CD14-positive monocyte (primary cell): ENCODE measurements at regions of chr6 and their contacts with region 1.

Region 1: GRCh38 chr6:30616811-30617564 is at the start of gene PPP1R10:
- DNase-seq: peak; percentile 100
- H3K4me3 ChIP-seq: peak within 1 kb of the TSS; percentile 83 to 100 (median 90)
- H3K4me3 Mint-ChIP-seq: peak within 1 kb of the TSS; percentile 99 to 100
- H3K27ac ChIP-seq: peak within 1 kb of the TSS; percentile 91 to 99
- H3K27ac Mint-ChIP-seq: peak within 1 kb of the TSS; percentile 99 to 100 (median 99)
- H3K4me1 ChIP-seq: peaks cover 27 to 39% of the 10 kb centered on the region in 2 donors
- H3K4me1 Mint-ChIP-seq: peaks cover 31% of the 10 kb centered on the region
- H3K27me3 ChIP-seq: no peaks in the 10 kb centered on the region
- H3K27me3 Mint-ChIP-seq: peaks cover 0 to 5% (median 1%) of the 10 kb centered on the region in 3 donors
- CTCF ChIP-seq: no peak
- polyA plus RNA-seq, gene PPP1R10: 9.5 to 18.3 (median 16.4) TPM

Region 2: DNA sequence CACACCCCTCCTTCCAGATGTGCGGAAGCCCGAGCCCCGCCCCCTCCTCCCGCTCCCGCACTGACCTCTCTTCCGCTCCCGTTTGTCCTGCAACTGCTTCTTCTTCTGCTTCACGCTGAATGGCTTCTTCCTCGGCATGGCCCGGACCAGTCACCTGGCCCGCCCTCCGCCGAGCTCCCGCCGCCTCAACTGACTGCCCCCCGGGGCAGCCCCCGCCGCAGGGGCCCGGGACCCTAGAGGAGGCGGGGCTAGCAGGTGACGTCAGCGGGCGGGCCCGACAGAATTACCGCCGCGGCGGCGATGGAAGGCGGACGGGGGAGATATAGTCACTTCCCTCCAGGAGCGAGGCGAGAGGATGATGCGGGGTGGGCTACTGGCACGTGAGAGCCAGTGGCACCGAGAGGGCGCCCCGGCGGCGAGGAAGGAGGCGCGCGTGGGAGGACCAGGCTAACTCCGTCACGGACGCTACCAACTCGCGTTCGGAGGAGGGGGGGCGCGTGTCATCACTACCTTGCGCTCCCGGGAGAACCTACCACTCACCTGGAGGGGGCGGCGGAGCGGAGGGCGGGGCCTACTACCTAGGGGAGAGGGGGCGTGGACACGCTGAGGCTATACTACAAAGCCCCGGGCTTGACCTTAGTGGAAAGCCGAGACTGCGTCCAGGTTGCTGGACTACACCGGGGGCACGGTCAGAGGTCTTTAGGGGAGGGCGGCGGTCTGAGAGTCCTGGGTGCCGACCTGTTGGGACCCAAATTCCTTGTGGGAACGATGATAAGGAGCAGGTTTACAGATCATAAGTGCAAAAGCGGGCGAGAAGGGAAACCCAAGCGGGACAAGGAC is 60.7 kb before region 1 on chr6 and contains the start of gene GNL1:
- intact Hi-C with region 1: loop called (anchors 2 kb)
- DNase-seq: peak; percentile 88 to 96 (median 94)
- H3K4me3 ChIP-seq: peak within 1 kb of the TSS; percentile 73 to 93 (median 93)
- H3K4me3 Mint-ChIP-seq: peak within 1 kb of the TSS; percentile 95
- H3K27ac ChIP-seq: peak within 1 kb of the TSS; percentile 92 to 93
- H3K27ac Mint-ChIP-seq: peak within 1 kb of the TSS; percentile 95 to 100 (median 99)
- H3K4me1 ChIP-seq: peaks cover 20 to 28% of the 10 kb centered on the region in 2 donors
- H3K4me1 Mint-ChIP-seq: peaks cover 19% of the 10 kb centered on the region
- H3K27me3 ChIP-seq: no peaks in the 10 kb centered on the region
- H3K27me3 Mint-ChIP-seq: peaks cover 0 to 6% (median 4%) of the 10 kb centered on the region in 3 donors
- CTCF ChIP-seq: no peak
- polyA plus RNA-seq, gene GNL1: 10.3 to 13.4 (median 12.9) TPM

Region 3: DNA sequence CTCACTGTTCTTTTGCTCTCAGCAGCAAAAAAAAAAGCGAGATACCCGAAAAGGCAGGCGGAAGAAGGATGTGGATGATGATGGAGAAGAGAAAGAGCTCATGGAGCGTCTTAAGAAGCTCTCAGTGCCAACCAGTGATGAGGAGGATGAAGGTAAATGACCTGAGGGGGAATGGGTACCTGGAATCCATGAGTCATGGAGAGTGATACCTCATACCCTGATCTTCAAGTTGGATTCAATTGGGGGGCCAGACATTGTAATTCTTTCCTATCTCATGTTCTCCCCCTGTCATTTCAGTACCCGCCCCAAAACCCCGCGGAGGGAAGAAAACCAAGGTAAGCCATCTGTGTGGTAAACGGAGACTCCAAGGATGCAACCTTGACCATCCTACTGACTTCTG is 38.9 kb before region 1 on chr6:
- intact Hi-C with region 1: loop called in 1 of 2 experiments (anchors 5 kb)
- DNase-seq: no peak
- H3K4me3 ChIP-seq: no peak overlapping the region
- H3K4me3 Mint-ChIP-seq: no peak overlapping the region
- H3K27ac ChIP-seq: no peak overlapping the region
- H3K27ac Mint-ChIP-seq: no peak overlapping the region
- H3K4me1 ChIP-seq: peaks cover under 1 to 6% of the 10 kb centered on the region in 2 donors
- H3K4me1 Mint-ChIP-seq: peaks cover 10% of the 10 kb centered on the region
- H3K27me3 ChIP-seq: no peaks in the 10 kb centered on the region
- H3K27me3 Mint-ChIP-seq: no peaks in the 10 kb centered on the region
- CTCF ChIP-seq: no peak

Region 4: GRCh38 chr6:30678964-30679726 is 62.2 kb after region 1 on chr6:
- intact Hi-C with region 1: loop called in 1 of 2 experiments (anchors 5 kb)
- DNase-seq: peak; percentile 81 to 88 (median 82)
- H3K4me3 ChIP-seq: peak overlapping the region in 2 of 3 experiments; percentile 16 to 100
- H3K4me3 Mint-ChIP-seq: peak overlapping the region; percentile 77 to 87
- H3K27ac ChIP-seq: peak overlapping the region; percentile 36 to 70
- H3K27ac Mint-ChIP-seq: peak overlapping the region; percentile 60 to 99 (median 80)
- H3K4me1 ChIP-seq: peaks cover 41 to 51% of the 10 kb centered on the region in 2 donors
- H3K4me1 Mint-ChIP-seq: peaks cover 47% of the 10 kb centered on the region
- H3K27me3 ChIP-seq: no peaks in the 10 kb centered on the region
- H3K27me3 Mint-ChIP-seq: peaks cover 0 to 3% (median 0%) of the 10 kb centered on the region in 3 donors
- CTCF ChIP-seq: peak; percentile 91

Region 5: DNA sequence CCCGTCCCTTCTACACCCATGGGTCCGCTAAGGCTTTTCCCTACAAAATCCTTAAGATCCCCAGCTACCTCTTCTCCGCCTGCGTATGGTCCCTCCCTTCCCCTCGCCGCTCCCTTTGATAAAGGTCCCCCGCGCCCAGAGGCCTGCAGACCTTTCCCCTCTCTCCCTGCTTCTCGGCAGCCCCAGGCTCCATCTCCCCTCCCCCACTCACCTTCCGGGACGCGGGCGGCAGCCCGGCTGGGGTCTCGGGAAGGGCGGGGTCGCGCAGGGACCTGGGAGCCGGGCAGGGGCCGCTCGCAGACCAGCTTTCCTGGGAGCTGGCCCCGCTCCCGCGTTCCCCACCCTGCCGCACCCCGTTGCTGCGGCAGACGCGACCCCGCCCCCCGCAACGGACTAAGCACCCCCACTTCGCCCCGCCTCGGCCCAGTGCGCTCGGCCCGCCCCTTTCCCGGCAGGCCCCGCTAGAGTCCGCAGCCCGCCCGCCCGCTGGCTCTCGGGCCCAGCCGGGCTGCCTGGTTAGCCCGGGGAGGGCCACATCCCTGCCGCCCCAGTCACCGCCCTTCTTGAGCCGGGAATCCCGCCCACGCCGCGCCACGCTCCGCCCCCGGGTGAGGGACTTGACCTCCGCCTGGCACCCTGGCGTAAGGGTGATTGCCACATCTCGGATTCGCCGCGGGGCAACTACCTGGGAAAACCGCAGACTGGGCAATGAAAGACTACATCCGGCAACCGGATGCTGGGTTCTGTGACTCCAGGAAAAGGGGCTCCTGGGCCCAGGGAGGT is 125.5 kb after region 1 on chr6 and contains the start of gene FLOT1:
- intact Hi-C with region 1: loop called in 1 of 2 experiments (anchors 5 kb)
- DNase-seq: peak; percentile 95 to 98 (median 96)
- H3K4me3 ChIP-seq: peak within 1 kb of the TSS; percentile 82 to 97 (median 90)
- H3K4me3 Mint-ChIP-seq: peak within 1 kb of the TSS; percentile 99
- H3K27ac ChIP-seq: peak within 1 kb of the TSS; percentile 64 to 87
- H3K27ac Mint-ChIP-seq: peak within 1 kb of the TSS; percentile 94 to 99 (median 97)
- H3K4me1 ChIP-seq: peaks cover 22 to 49% of the 10 kb centered on the region in 2 donors
- H3K4me1 Mint-ChIP-seq: peaks cover 45% of the 10 kb centered on the region
- H3K27me3 ChIP-seq: peaks cover 0 to 4% of the 10 kb centered on the region in 2 donors
- H3K27me3 Mint-ChIP-seq: peaks cover 5 to 12% (median 5%) of the 10 kb centered on the region in 3 donors
- CTCF ChIP-seq: no peak
- polyA plus RNA-seq, gene FLOT1: 124 to 153 (median 132) TPM